Prostate gland (tissue), 2 donors: ENCODE measurements at regions of chr4 and their contacts with region 1.

Region 1: GRCh38 chr4:153344131-153345010 is at the start of gene MND1:
- DNase-seq: peak; percentile 77
- H3K4me3 ChIP-seq: peak within 1 kb of the TSS; percentile 68 to 73
- H3K27ac ChIP-seq: peak within 1 kb of the TSS in 1 of 2 donors; percentile 55
- H3K4me1 ChIP-seq: no peaks in the 10 kb centered on the region
- H3K27me3 ChIP-seq: no peaks in the 10 kb centered on the region
- CTCF ChIP-seq: peak; percentile 75 to 91 (median 83)
- POLR2A ChIP-seq: peak; percentile 16
- total RNA-seq, gene MND1: 7.9 TPM in 1 of 2 donors, not detected in the other

Region 2: DNA sequence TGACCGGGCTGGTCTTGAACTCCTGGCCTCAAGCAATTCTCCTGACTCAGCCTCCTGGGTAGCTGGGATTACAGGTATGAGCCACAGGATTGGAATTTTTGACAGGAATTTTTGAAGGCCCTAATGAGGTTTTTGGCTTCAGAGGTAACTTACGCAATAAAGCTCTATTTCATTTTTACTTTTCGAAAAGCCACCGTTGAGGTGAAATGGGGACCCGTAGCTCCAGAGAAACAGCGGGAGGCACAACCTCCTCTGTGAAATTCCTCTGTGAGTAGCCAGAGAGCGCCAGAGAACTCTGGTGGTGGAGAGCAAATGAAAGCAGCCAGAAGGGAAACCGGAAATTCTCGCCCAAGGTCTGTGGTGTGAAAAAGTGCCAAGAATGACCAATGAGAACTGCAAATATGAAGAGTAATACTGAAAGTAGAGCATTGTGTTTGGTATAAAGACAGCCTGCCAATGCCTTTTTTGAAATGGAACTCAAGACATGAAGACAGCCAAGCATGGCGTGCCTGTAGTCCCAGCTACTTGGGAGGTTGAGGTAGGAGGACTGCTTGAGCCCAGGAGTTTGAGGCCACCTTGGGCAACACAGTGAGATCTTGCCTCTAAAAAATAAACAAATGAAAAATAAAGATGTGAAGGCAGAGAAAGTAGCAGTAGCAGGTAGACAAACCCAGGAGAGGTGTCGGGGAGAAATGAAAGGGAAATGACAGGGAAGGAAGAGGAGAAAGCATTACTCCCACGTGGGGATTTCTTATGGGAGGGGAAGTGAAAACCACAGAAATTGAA is 88.8 kb after region 1 on chr4:
- intact Hi-C with region 1: loop called (anchors 10 kb)
- DNase-seq: peak; percentile 69
- H3K4me3 ChIP-seq: no peak overlapping the region
- H3K27ac ChIP-seq: no peak overlapping the region
- H3K4me1 ChIP-seq: no peaks in the 10 kb centered on the region
- H3K27me3 ChIP-seq: no peaks in the 10 kb centered on the region
- CTCF ChIP-seq: peak; percentile 35 to 89 (median 74)
- POLR2A ChIP-seq: no peak

Region 3: GRCh38 chr4:153466081-153466948 is 121.9 kb after region 1 on chr4 and contains the start of gene TMEM131L:
- intact Hi-C with region 1: loop called (anchors 5 kb)
- DNase-seq: peak; percentile 51
- H3K4me3 ChIP-seq: peak within 1 kb of the TSS; percentile 64 to 81
- H3K27ac ChIP-seq: peak within 1 kb of the TSS; percentile 58 to 69
- H3K4me1 ChIP-seq: no peaks in the 10 kb centered on the region
- H3K27me3 ChIP-seq: no peaks in the 10 kb centered on the region
- CTCF ChIP-seq: peak in 2 of 4 experiments; percentile 16 to 23
- POLR2A ChIP-seq: no peak
- total RNA-seq, gene TMEM131L: 9.3 to 12.5 TPM

Region 4: DNA sequence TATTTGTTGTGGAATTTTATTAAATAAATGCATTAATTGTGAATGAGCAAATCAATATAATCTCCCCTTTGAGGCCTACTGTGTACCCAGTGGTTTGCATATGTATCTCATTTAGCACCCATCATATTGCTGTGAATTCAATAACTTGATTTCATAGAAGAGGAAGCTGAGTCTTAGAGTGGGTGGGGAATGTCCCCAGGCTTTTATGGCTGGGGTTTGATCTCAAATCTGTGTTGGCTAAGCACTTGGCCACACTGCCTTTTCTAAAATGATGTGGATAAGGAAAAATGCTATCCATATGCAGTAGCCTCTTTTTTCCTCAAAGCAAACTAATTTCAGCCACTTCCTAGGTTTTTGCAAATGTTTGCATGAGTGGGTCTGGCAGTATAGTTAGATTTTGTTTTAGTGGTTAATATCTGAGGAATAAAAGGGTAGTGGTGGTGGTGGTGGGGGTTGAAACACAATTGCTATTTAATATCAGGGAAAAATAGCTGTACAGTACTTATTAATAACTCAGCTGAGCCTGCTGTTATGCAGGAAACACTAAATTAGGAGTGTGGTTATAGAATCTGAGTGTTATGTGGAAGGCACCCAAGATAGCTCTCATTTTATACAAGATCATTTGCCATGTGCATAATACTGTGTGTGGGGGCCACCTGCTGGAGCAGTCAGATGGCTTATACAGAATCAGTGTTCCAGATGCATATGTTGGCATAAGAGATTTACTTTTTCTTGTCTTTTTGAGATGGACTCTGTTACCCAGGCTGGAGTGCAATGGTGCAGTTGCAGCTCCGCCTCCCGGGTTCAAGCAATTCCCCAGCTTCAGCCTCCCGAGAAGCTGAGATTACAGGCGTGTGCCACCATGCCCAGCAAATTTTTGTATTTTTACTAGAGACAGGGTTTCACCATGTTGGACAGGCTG is 229.8 kb after region 1 on chr4:
- intact Hi-C with region 1: loop called (anchors 2 kb)
- DNase-seq: peak; percentile 58
- H3K4me3 ChIP-seq: no peak overlapping the region
- H3K27ac ChIP-seq: no peak overlapping the region
- H3K4me1 ChIP-seq: no peaks in the 10 kb centered on the region
- H3K27me3 ChIP-seq: no peaks in the 10 kb centered on the region
- CTCF ChIP-seq: peak in 3 of 4 experiments; percentile 61 to 71 (median 69)
- POLR2A ChIP-seq: no peak

Region 5: GRCh38 chr4:153649572-153649991 is 305.2 kb after region 1 on chr4:
- intact Hi-C with region 1: loop called (anchors 5 kb)
- DNase-seq: no peak
- H3K4me3 ChIP-seq: no peak overlapping the region
- H3K27ac ChIP-seq: no peak overlapping the region
- H3K4me1 ChIP-seq: no peaks in the 10 kb centered on the region
- H3K27me3 ChIP-seq: no peaks in the 10 kb centered on the region
- CTCF ChIP-seq: no peak
- POLR2A ChIP-seq: no peak

Region 6: GRCh38 chr4:154314248-154314647 is 969.9 kb after region 1 on chr4:
- intact Hi-C with region 1: loop called (anchors 10 kb)
- DNase-seq: no peak
- H3K4me3 ChIP-seq: no peak overlapping the region
- H3K27ac ChIP-seq: no peak overlapping the region
- H3K4me1 ChIP-seq: no peaks in the 10 kb centered on the region
- H3K27me3 ChIP-seq: no peaks in the 10 kb centered on the region
- CTCF ChIP-seq: peak in 2 of 4 experiments; percentile 7 to 15
- POLR2A ChIP-seq: no peak